CD14-positive monocyte (primary cell): ENCODE measurements at regions of chr5 and their contacts with region 1.

Region 1: GRCh38 chr5:161544350-161544765 is 2.2 kb downstream of the GABRB2 start:
- DNase-seq: peak in 2 of 3 donors; percentile 11 to 27
- H3K4me3 ChIP-seq: no peak overlapping the region
- H3K4me3 Mint-ChIP-seq: peak overlapping the region in 1 of 2 donors; percentile 36
- H3K27ac ChIP-seq: no peak overlapping the region
- H3K27ac Mint-ChIP-seq: no peak overlapping the region
- H3K4me1 ChIP-seq: peaks cover 10 to 11% of the 10 kb centered on the region in 2 donors
- H3K4me1 Mint-ChIP-seq: peaks cover 21% of the 10 kb centered on the region
- H3K27me3 ChIP-seq: peaks cover 48 to 50% of the 10 kb centered on the region in 2 donors
- H3K27me3 Mint-ChIP-seq: peaks cover 47 to 56% (median 56%) of the 10 kb centered on the region in 3 donors
- CTCF ChIP-seq: peak; percentile 75

Region 2: GRCh38 chr5:161889971-161890370 is 345.6 kb after region 1 on chr5:
- intact Hi-C with region 1: no loop called
- DNase-seq: no peak
- H3K4me3 ChIP-seq: no peak overlapping the region
- H3K4me3 Mint-ChIP-seq: no peak overlapping the region
- H3K27ac ChIP-seq: no peak overlapping the region
- H3K27ac Mint-ChIP-seq: no peak overlapping the region
- H3K4me1 ChIP-seq: no peaks in the 10 kb centered on the region
- H3K4me1 Mint-ChIP-seq: no peaks in the 10 kb centered on the region
- H3K27me3 ChIP-seq: no peaks in the 10 kb centered on the region
- H3K27me3 Mint-ChIP-seq: no peaks in the 10 kb centered on the region
- CTCF ChIP-seq: no peak

Region 3: DNA sequence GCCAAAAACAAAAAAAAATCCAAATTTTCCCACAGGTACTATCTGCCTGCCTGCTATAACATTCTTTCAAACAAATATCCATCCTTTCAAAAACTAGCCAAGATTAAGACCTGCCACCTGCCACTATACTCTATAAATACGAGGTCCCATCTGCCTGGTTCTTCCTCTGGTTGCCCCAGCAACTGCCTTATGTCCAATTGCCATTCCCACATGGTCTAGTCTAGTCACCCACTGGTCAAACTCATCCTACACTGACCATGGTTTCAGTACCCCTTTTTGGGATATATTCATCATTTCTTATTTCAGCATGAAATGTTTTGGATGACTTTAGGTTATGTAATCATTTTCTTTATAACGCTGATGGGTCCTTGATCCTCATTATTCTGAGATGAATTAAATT is 1797.9 kb after region 1 on chr5:
- intact Hi-C with region 1: loop called in 1 of 2 experiments (anchors 5 kb)
- DNase-seq: peak in 2 of 3 donors; percentile 18 to 51
- H3K4me3 ChIP-seq: no peak overlapping the region
- H3K4me3 Mint-ChIP-seq: no peak overlapping the region
- H3K27ac ChIP-seq: no peak overlapping the region
- H3K27ac Mint-ChIP-seq: no peak overlapping the region
- H3K4me1 ChIP-seq: no peaks in the 10 kb centered on the region
- H3K4me1 Mint-ChIP-seq: peaks cover 4% of the 10 kb centered on the region
- H3K27me3 ChIP-seq: no peaks in the 10 kb centered on the region
- H3K27me3 Mint-ChIP-seq: peaks cover 0 to 2% (median 2%) of the 10 kb centered on the region in 3 donors
- CTCF ChIP-seq: no peak